ENCODE measurements at regions of chr22 and their contacts with region 1.

Region 1: GRCh38 chr22:24845041-24845898 is 39.3 kb downstream of the SGSM1 start:
- DNase-seq: no peak
- ATAC-seq: no peak

Region 2: GRCh38 chr22:24768537-24769374 is 76.5 kb before region 1 on chr22:
- intact Hi-C with region 1: loop called (anchors 1 kb)
- DNase-seq: no peak
- ATAC-seq: peak; percentile 57

Region 3: GRCh38 chr22:24789516-24789915 is 55.8 kb before region 1 on chr22:
- intact Hi-C with region 1: no loop called
- DNase-seq: no peak
- ATAC-seq: no peak

Region 4: GRCh38 chr22:24803011-24803542 is 42.2 kb before region 1 on chr22:
- intact Hi-C with region 1: loop called (anchors 5 kb)
- DNase-seq: no peak
- ATAC-seq: no peak

Measured in Right ventricle myocardium inferior (tissue), 1 donor.